H1 (cell line): ENCODE measurements at regions of chr5 and their contacts with region 1.

Region 1: GRCh38 chr5:178075840-178076548 is 37.3 kb upstream of the N4BP3 start:
- DNase-seq: peak; percentile 50 to 92
- H3K4me3 ChIP-seq: peak overlapping the region in 1 of 4 experiments; percentile 33; a peak in 2 of 8 replicates
- H3K27ac ChIP-seq: no peak overlapping the region
- H3K4me1 ChIP-seq: peaks cover 0 to 12% (median 4%) of the 10 kb centered on the region in 4 experiments; a peak in 2 of 7 replicates
- H3K27me3 ChIP-seq: peaks cover 0 to 11% (median 6%) of the 10 kb centered on the region in 4 experiments; a peak in 3 of 7 replicates
- CTCF ChIP-seq: peak in 2 of 3 experiments; percentile 87 to 93; a peak in 3 of 4 replicates
- EP300 ChIP-seq: no peak
- POLR2A ChIP-seq: no peak
- RAD21 ChIP-seq: peak; percentile 94 to 96

Region 2: GRCh38 chr5:177973066-177973635 is 102.8 kb before region 1 on chr5:
- CTCF ChIA-PET with region 1: no interaction called
- POLR2A ChIA-PET with region 1: no interaction called
- DNase-seq: no peak
- H3K4me3 ChIP-seq: no peak overlapping the region
- H3K27ac ChIP-seq: no peak overlapping the region
- H3K4me1 ChIP-seq: no peaks in the 10 kb centered on the region
- H3K27me3 ChIP-seq: no peaks in the 10 kb centered on the region
- CTCF ChIP-seq: no peak
- EP300 ChIP-seq: no peak
- POLR2A ChIP-seq: no peak
- RAD21 ChIP-seq: no peak

Region 3: DNA sequence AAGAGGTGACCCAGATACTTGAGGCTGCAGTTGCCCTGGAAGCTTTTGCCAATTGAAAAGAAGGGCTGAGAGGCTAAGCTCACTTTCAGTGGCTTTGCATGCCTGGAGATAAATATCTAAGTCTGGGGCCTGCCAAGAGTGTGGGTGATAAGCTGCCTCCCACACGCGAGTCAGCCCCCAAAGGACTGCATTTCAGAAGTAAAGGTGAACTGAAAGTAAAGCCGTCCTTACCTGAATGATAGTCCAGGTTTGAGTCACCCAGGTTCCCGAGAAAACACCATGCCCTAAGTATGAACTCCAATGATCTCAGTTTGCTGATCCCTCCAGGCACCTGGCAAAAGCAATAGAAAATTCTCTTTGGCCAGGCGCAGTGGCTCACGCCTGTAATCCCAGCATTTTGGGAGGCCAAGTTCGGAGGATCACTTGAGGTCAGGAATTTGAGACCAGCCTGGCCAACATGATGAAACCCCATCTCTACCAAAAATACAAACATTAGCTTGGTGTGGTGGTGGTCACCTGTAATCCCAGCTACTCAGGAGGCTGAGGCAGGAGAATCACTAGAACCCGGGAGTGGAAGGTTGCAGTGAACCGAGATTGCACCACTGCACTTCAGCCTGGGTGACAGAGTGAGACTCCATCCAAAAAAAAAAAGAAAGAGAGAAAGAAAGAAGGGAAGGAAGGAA is 15.0 kb after region 1 on chr5:
- CTCF ChIA-PET with region 1: interaction called, 38 read pairs
- POLR2A ChIA-PET with region 1: interaction called, 4 read pairs
- DNase-seq: no peak
- H3K4me3 ChIP-seq: no peak overlapping the region
- H3K27ac ChIP-seq: no peak overlapping the region
- H3K4me1 ChIP-seq: no peaks in the 10 kb centered on the region
- H3K27me3 ChIP-seq: no peaks in the 10 kb centered on the region
- CTCF ChIP-seq: no peak
- EP300 ChIP-seq: no peak
- POLR2A ChIP-seq: no peak
- RAD21 ChIP-seq: no peak

Region 4: GRCh38 chr5:178120868-178121357 is 44.9 kb after region 1 on chr5:
- CTCF ChIA-PET with region 1: interaction called, 189 read pairs
- POLR2A ChIA-PET with region 1: interaction called, 14 read pairs
- DNase-seq: peak; percentile 41 to 77
- H3K4me3 ChIP-seq: no peak overlapping the region
- H3K27ac ChIP-seq: no peak overlapping the region; the same call in 1 of the 2 replicates
- H3K4me1 ChIP-seq: peaks cover 11 to 64% (median 37%) of the 10 kb centered on the region in 4 experiments
- H3K27me3 ChIP-seq: no peaks in the 10 kb centered on the region
- CTCF ChIP-seq: peak in 2 of 3 experiments; percentile 74 to 88; a peak in 3 of 4 replicates
- EP300 ChIP-seq: no peak
- POLR2A ChIP-seq: no peak; a peak in 1 of 3 replicates
- RAD21 ChIP-seq: peak; percentile 38 to 61

Region 5: DNA sequence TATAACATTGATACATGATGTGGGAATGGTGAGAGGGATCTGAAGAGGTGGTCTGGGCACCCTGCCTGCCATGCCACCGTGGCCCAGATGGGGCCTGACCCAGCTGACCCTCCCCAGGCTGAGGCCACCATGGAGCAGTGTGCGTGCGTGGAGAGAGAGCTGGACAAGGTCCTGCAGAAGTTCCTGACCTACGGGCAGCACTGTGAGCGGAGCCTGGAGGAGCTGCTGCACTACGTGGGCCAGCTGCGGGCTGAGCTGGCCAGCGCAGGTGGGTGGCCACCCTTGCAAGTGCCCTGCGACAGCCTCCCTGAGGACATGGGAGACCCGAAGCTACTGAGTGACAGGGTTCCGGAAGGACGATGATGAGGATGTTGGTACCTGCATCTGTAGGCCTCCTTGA is 62.0 kb after region 1 on chr5:
- CTCF ChIA-PET with region 1: interaction called, 515 read pairs
- POLR2A ChIA-PET with region 1: interaction called, 115 read pairs
- DNase-seq: no peak
- H3K4me3 ChIP-seq: no peak overlapping the region
- H3K27ac ChIP-seq: no peak overlapping the region
- H3K4me1 ChIP-seq: no peaks in the 10 kb centered on the region; a peak in 1 of 7 replicates
- H3K27me3 ChIP-seq: no peaks in the 10 kb centered on the region
- CTCF ChIP-seq: no peak
- EP300 ChIP-seq: no peak
- POLR2A ChIP-seq: 0 out of 3 replicates have a peak, but pooled peaks of 1 of the 2 experiments have one; percentile 26
- RAD21 ChIP-seq: no peak

Region 6: GRCh38 chr5:178153573-178154343 is 77.8 kb after region 1 on chr5 and contains the start of gene NHP2:
- CTCF ChIA-PET with region 1: interaction called, 515 read pairs
- POLR2A ChIA-PET with region 1: interaction called, 37 read pairs
- DNase-seq: peak; percentile 95 to 99
- H3K4me3 ChIP-seq: peak within 1 kb of the TSS; percentile 81 to 89 (median 86)
- H3K27ac ChIP-seq: peak within 1 kb of the TSS; percentile 35; the same call in 1 of the 2 replicates
- H3K4me1 ChIP-seq: peaks cover 0 to 3% (median 2%) of the 10 kb centered on the region in 4 experiments; a peak in 4 of 7 replicates
- H3K27me3 ChIP-seq: no peaks in the 10 kb centered on the region
- CTCF ChIP-seq: no peak
- EP300 ChIP-seq: no peak
- POLR2A ChIP-seq: peak in 1 of 2 experiments; percentile 60; a peak in 2 of 3 replicates
- RAD21 ChIP-seq: no peak
- total RNA-seq, gene NHP2: 263 and 281 TPM in 2 replicates